Activated CD4-positive, alpha-beta T cell treated with anti-CD3 and anti-CD28 coated beads, Interleukin-2, amount 10 ng/mL, durations not matched to agents 24 days and 14 days (primary cell): ENCODE measurements at regions of chr4 and their contacts with region 1.

Region 1: DNA sequence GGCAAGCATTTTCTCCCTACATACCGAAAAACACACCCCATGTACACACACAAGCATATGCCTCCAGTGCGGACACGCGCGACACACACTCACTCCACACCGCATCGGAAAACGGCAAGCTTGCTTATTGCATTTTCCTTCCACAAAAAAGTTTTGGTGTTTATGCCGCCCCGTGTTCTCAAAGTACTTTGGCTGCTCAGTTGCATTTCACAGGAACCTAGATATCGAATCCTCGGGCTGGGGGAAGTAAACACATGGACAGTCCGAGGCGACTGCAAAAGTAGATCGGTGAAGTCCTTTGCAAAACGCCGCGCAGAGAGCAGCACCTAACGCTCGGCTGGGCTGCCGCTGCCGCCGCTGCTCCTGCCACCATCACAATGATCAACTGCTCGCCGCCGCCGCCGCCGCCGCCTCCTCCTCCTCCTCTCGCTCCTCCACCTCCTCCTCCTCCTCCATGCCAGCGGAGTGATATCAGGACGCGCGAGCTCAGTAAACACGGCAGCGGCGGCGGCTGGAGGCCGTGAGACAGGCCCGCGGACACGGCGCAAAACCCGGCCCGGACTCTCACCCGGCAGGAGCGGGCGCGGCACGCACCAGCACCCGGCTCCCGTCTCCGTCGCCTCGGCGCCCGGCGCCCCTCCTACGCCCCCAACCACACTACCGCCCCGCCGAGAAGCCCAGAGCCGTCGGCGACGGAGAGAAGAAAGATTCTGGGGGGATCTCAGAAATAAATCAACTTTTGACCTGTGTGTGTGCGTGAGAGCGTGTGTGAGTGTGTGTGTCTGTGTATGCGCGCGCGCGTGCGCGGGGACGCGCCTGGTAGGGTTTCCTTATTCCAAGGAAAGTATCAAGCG is at the start of gene MAML3:
- DNase-seq: peak; percentile 94
- H3K4me3 Mint-ChIP-seq: peak within 1 kb of the TSS; percentile 92
- H3K27ac Mint-ChIP-seq: peak within 1 kb of the TSS; percentile 81
- H3K4me1 Mint-ChIP-seq: peaks cover 34% of the 10 kb centered on the region
- H3K27me3 Mint-ChIP-seq: peaks cover 60% of the 10 kb centered on the region
- total RNA-seq, gene MAML3: 0.52 and 0.54 TPM in 2 replicates

Region 2: DNA sequence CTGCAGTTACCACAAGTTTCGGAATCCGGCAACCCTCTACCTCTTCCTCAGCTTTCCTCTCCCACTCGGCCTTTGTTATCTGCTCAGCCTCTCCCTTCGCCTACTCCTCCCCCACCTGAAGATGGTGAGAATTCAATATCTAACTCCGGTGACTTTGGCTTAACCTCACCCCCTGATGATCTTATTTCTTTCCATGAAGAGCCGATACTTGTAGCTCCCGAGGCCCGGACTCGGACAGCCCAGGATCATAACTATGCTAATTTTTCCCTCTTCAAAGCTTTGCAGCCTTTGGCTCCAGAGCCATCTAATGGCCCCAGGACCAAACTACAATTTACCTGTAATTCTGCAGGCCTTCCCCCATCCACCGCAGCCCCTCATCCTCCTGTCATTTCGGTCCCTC is 520.3 kb before region 1 on chr4:
- intact Hi-C with region 1: no loop called
- DNase-seq: no peak
- H3K4me3 Mint-ChIP-seq: no peak overlapping the region
- H3K27ac Mint-ChIP-seq: no peak overlapping the region
- H3K4me1 Mint-ChIP-seq: no peaks in the 10 kb centered on the region
- H3K27me3 Mint-ChIP-seq: peaks cover 32% of the 10 kb centered on the region

Region 3: DNA sequence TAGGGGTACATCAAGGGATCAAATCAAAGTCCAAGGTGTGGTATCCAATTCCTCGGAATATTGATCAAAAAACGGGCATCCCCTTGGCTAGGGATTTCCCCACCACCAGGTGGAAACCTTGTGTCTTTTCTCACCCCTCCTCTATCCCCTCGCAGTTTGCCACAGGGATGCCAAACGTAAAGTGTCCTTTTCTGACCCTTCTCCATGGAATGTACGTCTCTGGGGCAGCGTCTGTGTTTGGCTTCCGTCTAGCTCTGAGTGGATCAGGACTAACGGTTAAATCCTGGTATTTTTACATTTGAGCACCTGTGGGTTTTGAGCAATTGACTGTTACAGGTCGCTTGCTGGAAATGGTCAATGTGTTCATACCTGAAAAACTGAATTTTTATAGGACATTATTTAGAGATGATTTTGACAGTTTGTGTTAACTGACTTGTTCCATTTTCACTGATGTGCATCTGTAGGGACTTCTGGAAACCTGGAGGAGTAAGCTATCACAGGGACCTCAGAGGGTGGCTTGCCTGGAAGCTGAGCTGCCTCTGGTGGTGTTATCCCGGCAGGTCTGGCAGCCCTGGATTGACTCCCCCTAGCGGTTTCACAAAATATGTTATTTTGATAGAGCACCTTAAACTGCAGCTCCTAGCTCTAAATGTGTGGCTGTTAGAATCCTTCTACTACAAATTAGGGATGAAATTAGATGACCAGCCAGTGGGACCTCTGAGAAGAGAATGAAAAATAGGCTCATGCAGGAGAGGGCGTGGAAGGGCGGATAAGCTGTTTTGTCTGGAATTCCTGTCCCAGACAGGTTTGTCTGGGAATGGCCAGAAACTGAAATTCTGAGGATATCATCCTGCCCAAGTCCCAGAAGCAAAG is 497.1 kb before region 1 on chr4:
- intact Hi-C with region 1: loop called (anchors 1 kb)
- DNase-seq: peak; percentile 84
- H3K4me3 Mint-ChIP-seq: peak overlapping the region; percentile 75
- H3K27ac Mint-ChIP-seq: peak overlapping the region; percentile 98
- H3K4me1 Mint-ChIP-seq: peaks cover 32% of the 10 kb centered on the region
- H3K27me3 Mint-ChIP-seq: peaks cover 5% of the 10 kb centered on the region

Region 4: GRCh38 chr4:139950568-139950967 is 203.4 kb before region 1 on chr4:
- intact Hi-C with region 1: loop called (anchors 1 kb)
- DNase-seq: peak; percentile 87
- H3K4me3 Mint-ChIP-seq: peak overlapping the region; percentile 59
- H3K27ac Mint-ChIP-seq: peak overlapping the region; percentile 88
- H3K4me1 Mint-ChIP-seq: peaks cover 35% of the 10 kb centered on the region
- H3K27me3 Mint-ChIP-seq: peaks cover 4% of the 10 kb centered on the region

Region 5: DNA sequence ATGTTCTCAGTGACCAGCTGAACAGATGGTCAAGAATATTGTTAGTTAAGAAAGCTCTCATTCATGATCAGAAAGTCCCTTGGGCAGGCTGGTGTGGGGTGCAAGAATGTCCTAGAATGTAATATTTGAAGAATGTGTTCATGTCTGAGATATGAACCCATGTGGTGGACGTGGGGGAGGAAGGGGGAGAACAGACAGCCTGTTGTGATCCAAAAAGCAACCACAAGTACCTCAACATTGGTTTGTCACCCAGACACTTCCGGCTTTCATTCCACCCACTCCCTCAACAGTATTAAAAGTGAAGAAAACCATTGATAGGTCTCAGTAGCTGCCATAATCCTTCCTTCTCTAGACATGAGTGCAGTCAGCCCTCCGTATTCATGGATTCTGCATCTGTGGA is 82.1 kb before region 1 on chr4:
- intact Hi-C with region 1: loop called (anchors 1 kb)
- DNase-seq: peak; percentile 89
- H3K4me3 Mint-ChIP-seq: peak overlapping the region; percentile 73
- H3K27ac Mint-ChIP-seq: peak overlapping the region; percentile 83
- H3K4me1 Mint-ChIP-seq: peaks cover 44% of the 10 kb centered on the region
- H3K27me3 Mint-ChIP-seq: peaks cover 41% of the 10 kb centered on the region

Region 6: GRCh38 chr4:140116442-140117104 is 37.4 kb before region 1 on chr4:
- intact Hi-C with region 1: loop called (anchors 1 kb)
- DNase-seq: peak; percentile 80
- H3K4me3 Mint-ChIP-seq: peak overlapping the region; percentile 43
- H3K27ac Mint-ChIP-seq: peak overlapping the region; percentile 76
- H3K4me1 Mint-ChIP-seq: peaks cover 24% of the 10 kb centered on the region
- H3K27me3 Mint-ChIP-seq: peaks cover 19% of the 10 kb centered on the region

Region 7: DNA sequence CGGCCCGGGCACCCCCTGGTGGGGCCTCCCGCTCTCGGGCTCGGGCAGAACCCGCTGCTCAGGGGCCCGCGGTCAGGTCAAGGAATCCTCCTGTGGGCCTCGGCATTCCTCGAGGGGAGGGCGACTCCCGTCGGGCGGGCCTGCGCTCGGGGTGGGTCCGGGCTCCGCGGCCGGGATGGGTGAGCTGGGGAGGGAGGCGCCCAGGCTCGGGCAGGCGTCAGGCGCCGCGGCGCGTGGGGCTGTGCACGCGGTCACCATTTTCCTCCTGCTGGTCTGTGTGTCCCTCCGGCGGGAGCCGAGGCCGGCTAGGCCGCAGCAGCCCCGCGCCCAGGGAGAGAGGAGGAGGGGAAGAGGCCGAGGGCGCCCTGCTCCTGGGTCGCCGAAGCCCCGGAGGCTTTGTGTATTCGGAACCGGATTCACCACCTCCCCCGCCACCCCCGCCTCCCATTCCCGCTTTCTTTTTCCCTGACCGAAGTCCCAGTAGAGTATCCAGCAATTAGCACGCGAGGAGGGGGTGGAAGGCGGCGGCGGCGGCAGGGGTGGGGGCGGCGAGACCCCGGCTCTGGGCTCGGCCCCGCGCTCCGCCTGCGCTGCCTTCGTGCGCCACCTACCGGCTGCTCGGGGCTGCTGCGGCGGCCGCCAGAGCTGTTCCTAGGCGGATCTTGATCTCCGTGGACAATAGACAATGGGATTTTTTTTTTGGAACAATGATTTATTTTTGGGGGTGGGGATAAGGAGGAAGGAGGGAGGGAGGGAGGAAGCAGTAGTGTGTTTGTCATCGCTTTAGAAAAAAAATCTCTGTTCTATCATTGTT is 99.0 kb after region 1 on chr4:
- intact Hi-C with region 1: loop called (anchors 1 kb)
- DNase-seq: peak; percentile 89
- H3K4me3 Mint-ChIP-seq: peak overlapping the region; percentile 62
- H3K27ac Mint-ChIP-seq: no peak overlapping the region
- H3K4me1 Mint-ChIP-seq: peaks cover 28% of the 10 kb centered on the region
- H3K27me3 Mint-ChIP-seq: peaks cover 23% of the 10 kb centered on the region